ENCODE measurements at regions of chr7 and their contacts with region 1.

Region 1: DNA sequence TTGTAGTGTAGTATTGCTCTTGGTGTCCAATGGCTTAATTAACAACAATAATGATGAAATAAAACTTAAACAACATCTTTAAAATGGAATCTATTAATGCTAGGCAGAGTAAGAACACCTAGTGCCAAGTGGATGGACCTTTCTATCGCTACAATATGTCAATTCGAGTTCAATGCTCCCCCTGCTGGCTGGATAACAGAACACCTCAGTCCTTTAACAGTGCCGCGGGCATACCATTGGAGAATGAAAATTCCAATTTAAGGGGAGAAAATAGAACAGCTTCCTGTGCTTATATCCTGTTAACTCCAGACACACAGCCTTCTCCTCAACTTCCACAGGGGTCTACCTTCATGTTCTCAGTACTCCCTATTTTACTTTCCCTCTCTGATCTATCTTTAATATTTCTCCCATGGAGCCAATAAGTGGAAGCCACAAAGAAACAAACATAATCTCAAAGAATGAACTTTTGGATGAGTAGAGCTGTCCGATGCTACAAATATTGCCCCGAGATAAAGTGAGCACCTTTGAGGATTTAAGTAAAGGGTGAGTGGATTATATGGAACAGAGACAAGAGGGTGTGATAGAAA is 41.4 kb downstream of the COL1A2 start:
- DNase-seq: peak in 1 of 2 donors; percentile 80
- ATAC-seq: peak; percentile 71 to 85 (median 81)
- H3K4me3 ChIP-seq: no peak overlapping the region
- H3K27ac ChIP-seq: no peak overlapping the region
- H3K4me1 ChIP-seq: peaks cover 0 to 15% (median 0%) of the 10 kb centered on the region in 9 donors
- H3K27me3 ChIP-seq: peaks cover 0 to 14% (median 8%) of the 10 kb centered on the region in 7 donors
- CTCF ChIP-seq: peak; percentile 59 to 88 (median 85)

Region 2: DNA sequence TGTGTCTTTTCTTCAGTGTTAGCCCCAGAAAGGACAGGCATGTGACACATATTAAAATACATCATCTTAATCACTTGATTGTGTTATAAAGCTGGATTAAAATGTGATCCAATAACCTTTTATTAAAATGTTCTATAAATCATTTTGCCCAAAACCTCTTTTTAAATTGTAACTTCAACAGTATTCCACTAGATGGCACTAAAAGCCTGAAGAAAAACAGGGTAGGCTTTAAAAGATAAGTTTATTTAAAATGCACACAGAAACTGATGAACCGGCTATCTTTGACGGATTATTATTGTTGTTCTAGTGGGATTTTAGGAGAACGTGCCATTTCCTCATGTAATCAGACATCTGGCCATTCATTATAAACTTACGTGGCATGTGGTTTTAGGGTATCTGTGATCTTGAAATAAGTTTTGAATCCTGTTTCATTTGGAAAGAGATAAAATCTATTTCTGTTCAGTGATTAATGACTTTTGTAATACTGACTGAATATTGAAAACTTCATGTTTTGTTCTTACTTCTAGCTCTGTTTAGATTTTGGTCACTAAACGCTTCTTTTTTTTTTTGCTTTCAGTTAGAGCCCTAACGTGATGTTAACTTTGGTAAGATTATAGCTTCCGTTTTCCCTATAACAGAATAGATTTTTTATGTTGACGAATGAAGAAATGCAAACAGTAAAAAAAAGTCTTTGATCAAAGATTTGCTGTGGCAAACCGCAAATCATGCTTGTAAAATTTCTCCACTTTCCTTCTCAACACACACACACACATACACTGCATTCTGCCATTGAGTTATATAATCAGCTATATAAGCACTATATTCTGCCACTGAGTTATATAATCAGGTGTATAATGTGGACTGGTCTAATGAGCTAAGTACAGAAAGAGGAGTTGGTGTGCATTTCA is 1190.3 kb before region 1 on chr7:
- intact Hi-C with region 1: loop called in 1 of 10 experiments (anchors 10 kb)
- DNase-seq: no peak
- ATAC-seq: no peak
- H3K4me3 ChIP-seq: no peak overlapping the region
- H3K27ac ChIP-seq: no peak overlapping the region
- H3K4me1 ChIP-seq: peaks cover 0 to 7% (median 0%) of the 10 kb centered on the region in 9 donors
- H3K27me3 ChIP-seq: no peaks in the 10 kb centered on the region
- CTCF ChIP-seq: peak; percentile 33 to 73 (median 63)

Region 3: DNA sequence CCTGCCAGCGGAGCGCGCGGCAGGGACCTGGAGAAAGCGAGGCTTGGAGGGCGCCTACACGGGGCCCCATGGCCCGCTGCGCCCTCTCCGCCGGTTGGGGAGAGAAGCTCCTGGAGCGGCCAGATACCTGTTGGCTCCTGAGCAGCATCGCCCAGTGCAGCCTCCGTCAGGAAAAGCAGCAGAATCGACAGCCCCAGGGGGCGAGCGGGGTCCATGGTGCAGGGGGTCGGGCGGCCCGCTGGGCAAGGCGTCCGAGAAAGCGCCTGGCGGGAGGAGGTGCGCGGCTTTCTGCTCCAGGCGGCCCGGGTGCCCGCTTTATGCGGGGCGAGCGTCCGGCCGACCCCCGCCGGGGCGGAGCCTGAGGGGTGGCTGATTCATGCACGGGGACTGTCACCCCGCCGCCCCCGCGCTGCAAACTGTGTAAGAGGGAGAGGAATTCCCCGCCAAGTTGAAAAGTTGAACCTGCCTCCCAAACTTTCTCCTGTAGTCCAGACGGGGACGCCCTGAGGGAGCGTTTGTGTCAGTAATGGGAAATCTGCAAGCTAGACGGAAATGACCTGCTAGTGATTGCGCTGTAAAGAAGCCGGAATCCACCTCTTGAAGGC is 545.5 kb before region 1 on chr7 and contains the start of gene TFPI2:
- intact Hi-C with region 1: loop called in 1 of 10 experiments (anchors 10 kb)
- DNase-seq: peak; percentile 15 to 47
- ATAC-seq: peak; percentile 62 to 85 (median 79)
- H3K4me3 ChIP-seq: peak within 1 kb of the TSS; percentile 41 to 68 (median 62)
- H3K27ac ChIP-seq: peak within 1 kb of the TSS in 9 of 10 donors; percentile 13 to 66 (median 46)
- H3K4me1 ChIP-seq: peaks cover 0 to 26% (median 11%) of the 10 kb centered on the region in 9 donors
- H3K27me3 ChIP-seq: peaks cover 0 to 33% (median 9%) of the 10 kb centered on the region in 7 donors
- CTCF ChIP-seq: peak in 3 of 9 donors; percentile 18 to 41 (median 24)
- total RNA-seq, gene TFPI2: 1.1 to 13.4 (median 2.2) TPM

Region 4: DNA sequence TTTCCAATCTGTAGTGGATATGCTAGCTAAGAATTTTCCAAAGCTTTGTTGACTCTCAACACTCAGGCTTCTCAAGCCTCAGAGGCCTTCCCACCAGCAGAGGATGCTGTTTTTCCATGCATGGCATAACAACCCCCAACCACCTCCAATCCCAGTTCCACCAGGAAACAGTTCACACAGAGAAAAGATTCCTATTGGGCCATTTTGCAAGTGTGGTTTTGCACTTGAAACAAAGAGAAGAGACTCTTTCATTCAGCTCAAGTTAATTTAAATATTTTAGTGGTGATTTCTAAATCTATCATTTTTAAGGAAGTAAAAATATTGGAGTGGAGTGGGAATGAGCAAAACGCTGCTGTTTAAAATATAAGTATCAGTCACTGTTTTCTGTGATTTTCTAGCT is 147.0 kb before region 1 on chr7:
- intact Hi-C with region 1: loop called in 8 of 10 experiments (anchors 1 to 10 kb)
- DNase-seq: peak in 1 of 2 donors; percentile 67
- ATAC-seq: peak in 7 of 8 donors; percentile 80 to 92 (median 87)
- H3K4me3 ChIP-seq: no peak overlapping the region
- H3K27ac ChIP-seq: no peak overlapping the region
- H3K4me1 ChIP-seq: no peaks in the 10 kb centered on the region
- H3K27me3 ChIP-seq: peaks cover 0 to 10% (median 0%) of the 10 kb centered on the region in 7 donors
- CTCF ChIP-seq: peak; percentile 32 to 93 (median 77)